CD4-positive, alpha-beta memory T cell (primary cell): ENCODE measurements at regions of chr18 and their contacts with region 1.

Region 1: DNA sequence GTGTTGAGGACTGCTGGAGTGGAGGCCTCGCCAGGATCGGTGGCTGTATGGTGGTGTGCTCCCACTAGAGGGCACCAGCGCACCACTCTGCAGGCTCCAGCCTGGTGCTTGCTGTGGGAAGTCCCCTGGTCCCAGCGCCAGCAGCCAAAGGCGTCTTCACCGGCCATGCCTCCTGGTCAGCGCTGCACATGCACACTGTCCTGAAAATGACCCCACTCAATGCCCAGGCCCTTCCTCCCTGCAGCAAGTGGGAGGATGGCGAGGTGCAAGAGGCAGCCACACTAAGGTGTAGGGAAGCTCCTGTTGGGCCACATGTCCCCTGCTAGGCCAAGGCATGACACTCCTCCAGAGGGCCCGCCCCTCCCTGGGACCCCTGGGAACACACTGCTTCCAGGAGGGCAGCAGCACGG is 136.5 kb downstream of the CTIF start:
- DNase-seq: peak; percentile 70 to 79 (median 75)
- H3K4me3 ChIP-seq: no peak overlapping the region
- H3K4me3 Mint-ChIP-seq: no peak overlapping the region
- H3K27ac ChIP-seq: no peak overlapping the region
- H3K27ac Mint-ChIP-seq: peak overlapping the region in 1 of 7 donors; percentile 23
- H3K4me1 ChIP-seq: peaks cover 7% of the 10 kb centered on the region
- H3K4me1 Mint-ChIP-seq: peaks cover 0 to 3% (median 2%) of the 10 kb centered on the region in 4 donors
- H3K27me3 ChIP-seq: no peaks in the 10 kb centered on the region
- H3K27me3 Mint-ChIP-seq: no peaks in the 10 kb centered on the region

Region 2: GRCh38 chr18:49041435-49042245 is 366.3 kb after region 1 on chr18:
- CTCF ChIA-PET with region 1: interaction called, 14 read pairs
- POLR2A ChIA-PET with region 1: no interaction called
- intact Hi-C with region 1: loop called (anchors 1 kb)
- DNase-seq: peak in 4 of 5 donors; percentile 34 to 52 (median 42)
- H3K4me3 ChIP-seq: no peak overlapping the region
- H3K4me3 Mint-ChIP-seq: no peak overlapping the region
- H3K27ac ChIP-seq: no peak overlapping the region
- H3K27ac Mint-ChIP-seq: peak overlapping the region in 1 of 7 donors; percentile 8
- H3K4me1 ChIP-seq: no peaks in the 10 kb centered on the region
- H3K4me1 Mint-ChIP-seq: peaks cover 0 to 6% (median 0%) of the 10 kb centered on the region in 4 donors
- H3K27me3 ChIP-seq: no peaks in the 10 kb centered on the region
- H3K27me3 Mint-ChIP-seq: no peaks in the 10 kb centered on the region

Region 3: DNA sequence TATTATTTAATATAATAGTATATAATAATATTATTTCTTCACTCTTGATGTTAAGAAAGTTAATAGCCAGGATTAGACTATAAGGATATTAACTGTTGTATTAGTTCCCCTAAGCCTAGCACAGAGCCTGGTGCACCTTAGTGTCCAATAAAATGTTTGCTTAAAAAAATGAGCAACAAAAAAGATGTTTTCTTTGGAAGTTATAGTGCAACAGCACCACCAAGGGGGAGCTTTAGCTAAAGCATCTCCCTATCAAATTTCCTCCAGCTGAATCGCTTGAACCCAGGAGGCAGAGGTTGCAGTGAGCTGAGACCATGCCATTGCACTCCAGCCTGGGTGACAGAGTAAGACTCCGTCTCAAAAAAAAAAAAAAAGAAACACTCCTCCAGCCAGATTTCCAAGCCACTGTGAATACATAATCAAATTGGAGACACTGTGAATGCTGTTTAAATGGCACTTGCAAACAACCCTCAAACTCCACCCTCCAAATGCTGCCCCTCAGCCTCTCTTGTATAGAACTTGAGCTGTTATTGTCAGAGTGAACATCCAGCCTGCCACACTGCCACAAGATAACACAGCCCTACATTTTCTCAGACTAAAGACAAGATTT is 563.2 kb after region 1 on chr18:
- CTCF ChIA-PET with region 1: interaction called, 14 read pairs
- POLR2A ChIA-PET with region 1: no interaction called
- intact Hi-C with region 1: loop called (anchors 1 kb)
- DNase-seq: peak in 3 of 5 donors; percentile 4 to 18 (median 11)
- H3K4me3 ChIP-seq: no peak overlapping the region
- H3K4me3 Mint-ChIP-seq: no peak overlapping the region
- H3K27ac ChIP-seq: no peak overlapping the region
- H3K27ac Mint-ChIP-seq: peak overlapping the region in 2 of 7 donors; percentile 2 to 13
- H3K4me1 ChIP-seq: no peaks in the 10 kb centered on the region
- H3K4me1 Mint-ChIP-seq: no peaks in the 10 kb centered on the region
- H3K27me3 ChIP-seq: no peaks in the 10 kb centered on the region
- H3K27me3 Mint-ChIP-seq: no peaks in the 10 kb centered on the region

Region 4: GRCh38 chr18:49412679-49413078 is 737.3 kb after region 1 on chr18:
- CTCF ChIA-PET with region 1: interaction called, 4 read pairs
- POLR2A ChIA-PET with region 1: no interaction called
- intact Hi-C with region 1: loop called (anchors 1 kb)
- DNase-seq: peak in 1 of 5 donors; percentile 9
- H3K4me3 ChIP-seq: no peak overlapping the region
- H3K4me3 Mint-ChIP-seq: peak overlapping the region in 7 of 8 donors; percentile 9 to 65 (median 47)
- H3K27ac ChIP-seq: peak overlapping the region; percentile 33
- H3K27ac Mint-ChIP-seq: peak overlapping the region; percentile 14 to 90 (median 77)
- H3K4me1 ChIP-seq: peaks cover 45% of the 10 kb centered on the region
- H3K4me1 Mint-ChIP-seq: peaks cover 30 to 44% (median 38%) of the 10 kb centered on the region in 4 donors
- H3K27me3 ChIP-seq: no peaks in the 10 kb centered on the region
- H3K27me3 Mint-ChIP-seq: no peaks in the 10 kb centered on the region

Region 5: GRCh38 chr18:49459404-49460171 is 784.2 kb after region 1 on chr18:
- CTCF ChIA-PET with region 1: no interaction called
- POLR2A ChIA-PET with region 1: no interaction called
- intact Hi-C with region 1: loop called (anchors 5 kb)
- DNase-seq: peak in 4 of 5 donors; percentile 16 to 53 (median 26)
- H3K4me3 ChIP-seq: peak overlapping the region; percentile 43 to 89
- H3K4me3 Mint-ChIP-seq: peak overlapping the region; percentile 86 to 95 (median 91)
- H3K27ac ChIP-seq: peak overlapping the region; percentile 85
- H3K27ac Mint-ChIP-seq: peak overlapping the region; percentile 67 to 93 (median 90)
- H3K4me1 ChIP-seq: peaks cover 45% of the 10 kb centered on the region
- H3K4me1 Mint-ChIP-seq: peaks cover 34 to 61% (median 44%) of the 10 kb centered on the region in 4 donors
- H3K27me3 ChIP-seq: no peaks in the 10 kb centered on the region
- H3K27me3 Mint-ChIP-seq: no peaks in the 10 kb centered on the region

Region 6: DNA sequence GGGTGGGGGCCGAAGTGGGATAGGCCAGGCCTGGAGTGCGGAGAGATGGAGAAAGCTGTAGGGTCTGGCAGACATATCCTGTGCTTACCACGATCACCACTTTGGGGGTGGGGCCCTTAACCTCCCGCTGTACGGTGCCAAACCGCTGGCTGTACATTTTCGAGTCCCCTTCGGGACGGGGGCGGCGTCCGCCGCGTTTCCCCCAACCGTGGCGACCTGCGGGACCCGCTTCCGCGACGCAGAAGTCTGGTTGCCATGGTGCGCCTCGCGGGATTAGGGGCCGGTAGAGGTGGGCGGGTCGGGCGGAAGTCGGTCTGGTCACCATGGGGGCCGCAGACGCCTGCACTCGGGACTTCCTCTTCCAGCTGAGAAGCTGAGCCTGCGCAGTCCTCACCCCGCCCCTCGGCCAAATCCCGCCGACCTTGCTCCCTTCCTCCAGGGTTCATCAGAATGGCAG is 1590.9 kb after region 1 on chr18 and contains the start of gene CFAP53:
- CTCF ChIA-PET with region 1: no interaction called
- POLR2A ChIA-PET with region 1: no interaction called
- intact Hi-C with region 1: loop called (anchors 2 kb)
- DNase-seq: peak; percentile 73 to 83 (median 77)
- H3K4me3 ChIP-seq: peak within 1 kb of the TSS; percentile 58 to 63
- H3K4me3 Mint-ChIP-seq: peak within 1 kb of the TSS; percentile 83 to 97 (median 90)
- H3K27ac ChIP-seq: peak within 1 kb of the TSS; percentile 49
- H3K27ac Mint-ChIP-seq: peak within 1 kb of the TSS; percentile 81 to 93 (median 90)
- H3K4me1 ChIP-seq: peaks cover 15% of the 10 kb centered on the region
- H3K4me1 Mint-ChIP-seq: peaks cover 11 to 23% (median 18%) of the 10 kb centered on the region in 4 donors
- H3K27me3 ChIP-seq: no peaks in the 10 kb centered on the region
- H3K27me3 Mint-ChIP-seq: no peaks in the 10 kb centered on the region
- total RNA-seq, gene CFAP53: 1.4 to 1.6 TPM